CD14-positive monocyte (primary cell): ENCODE measurements at regions of chr4 and their contacts with region 1.

Region 1: GRCh38 chr4:184343502-184344177 is 126.0 kb upstream of the ENPP6 start:
- DNase-seq: peak in 2 of 3 donors; percentile 52 to 56
- H3K4me3 ChIP-seq: peak overlapping the region; percentile 50 to 87 (median 76)
- H3K4me3 Mint-ChIP-seq: peak overlapping the region; percentile 82 to 93
- H3K27ac ChIP-seq: peak overlapping the region; percentile 78 to 98
- H3K27ac Mint-ChIP-seq: peak overlapping the region; percentile 89 to 99 (median 98)
- H3K4me1 ChIP-seq: peaks cover 64 to 72% of the 10 kb centered on the region in 2 donors
- H3K4me1 Mint-ChIP-seq: peaks cover 77% of the 10 kb centered on the region
- H3K27me3 ChIP-seq: no peaks in the 10 kb centered on the region
- H3K27me3 Mint-ChIP-seq: peaks cover 0 to 3% (median 0%) of the 10 kb centered on the region in 3 donors
- CTCF ChIP-seq: no peak

Region 2: DNA sequence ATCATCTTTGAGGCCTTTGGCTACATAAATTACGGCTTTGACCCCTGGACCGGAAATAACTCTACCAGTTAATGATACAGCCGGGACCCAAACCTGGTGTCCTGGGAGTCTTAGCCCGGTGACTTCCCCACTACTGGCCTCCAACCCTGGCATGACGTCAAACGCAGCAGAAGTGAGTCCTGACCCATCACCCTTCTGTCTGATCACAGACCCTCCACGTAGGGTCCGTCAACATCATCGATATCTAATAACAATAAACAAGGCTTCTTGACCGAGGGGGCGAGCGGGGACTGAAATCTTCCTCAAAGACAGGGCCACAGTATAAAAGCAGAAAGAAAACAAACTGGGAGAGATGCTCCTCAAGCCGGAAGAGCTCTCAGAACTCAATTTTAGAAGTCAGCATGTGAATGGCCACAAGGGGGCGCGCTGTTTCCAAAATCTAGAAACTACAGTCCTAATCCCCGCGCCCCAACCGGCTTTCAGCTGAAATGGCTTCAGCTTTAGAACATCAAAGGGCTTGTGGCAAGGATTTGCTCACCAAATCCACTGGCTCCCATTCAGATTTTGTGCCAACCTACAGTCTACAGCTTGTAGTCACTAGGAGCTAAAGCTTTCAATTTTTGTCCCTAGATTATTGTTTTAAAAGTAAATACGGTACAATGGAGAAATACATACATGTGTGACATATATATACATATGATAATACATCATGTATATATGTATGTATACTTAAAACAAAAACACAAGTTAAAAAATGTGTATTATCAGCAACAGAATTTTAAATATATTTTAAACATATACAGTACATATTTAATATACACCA is 79.5 kb before region 1 on chr4:
- intact Hi-C with region 1: loop called in 1 of 2 experiments (anchors 10 kb)
- DNase-seq: peak; percentile 85 to 91 (median 90)
- H3K4me3 ChIP-seq: no peak overlapping the region
- H3K4me3 Mint-ChIP-seq: peak overlapping the region; percentile 14 to 61
- H3K27ac ChIP-seq: peak overlapping the region in 1 of 2 donors; percentile 24
- H3K27ac Mint-ChIP-seq: peak overlapping the region in 4 of 7 donors; percentile 15 to 74 (median 31)
- H3K4me1 ChIP-seq: peaks cover 22 to 38% of the 10 kb centered on the region in 2 donors
- H3K4me1 Mint-ChIP-seq: peaks cover 44% of the 10 kb centered on the region
- H3K27me3 ChIP-seq: no peaks in the 10 kb centered on the region
- H3K27me3 Mint-ChIP-seq: peaks cover 0 to 4% (median 0%) of the 10 kb centered on the region in 3 donors
- CTCF ChIP-seq: peak; percentile 80

Region 3: DNA sequence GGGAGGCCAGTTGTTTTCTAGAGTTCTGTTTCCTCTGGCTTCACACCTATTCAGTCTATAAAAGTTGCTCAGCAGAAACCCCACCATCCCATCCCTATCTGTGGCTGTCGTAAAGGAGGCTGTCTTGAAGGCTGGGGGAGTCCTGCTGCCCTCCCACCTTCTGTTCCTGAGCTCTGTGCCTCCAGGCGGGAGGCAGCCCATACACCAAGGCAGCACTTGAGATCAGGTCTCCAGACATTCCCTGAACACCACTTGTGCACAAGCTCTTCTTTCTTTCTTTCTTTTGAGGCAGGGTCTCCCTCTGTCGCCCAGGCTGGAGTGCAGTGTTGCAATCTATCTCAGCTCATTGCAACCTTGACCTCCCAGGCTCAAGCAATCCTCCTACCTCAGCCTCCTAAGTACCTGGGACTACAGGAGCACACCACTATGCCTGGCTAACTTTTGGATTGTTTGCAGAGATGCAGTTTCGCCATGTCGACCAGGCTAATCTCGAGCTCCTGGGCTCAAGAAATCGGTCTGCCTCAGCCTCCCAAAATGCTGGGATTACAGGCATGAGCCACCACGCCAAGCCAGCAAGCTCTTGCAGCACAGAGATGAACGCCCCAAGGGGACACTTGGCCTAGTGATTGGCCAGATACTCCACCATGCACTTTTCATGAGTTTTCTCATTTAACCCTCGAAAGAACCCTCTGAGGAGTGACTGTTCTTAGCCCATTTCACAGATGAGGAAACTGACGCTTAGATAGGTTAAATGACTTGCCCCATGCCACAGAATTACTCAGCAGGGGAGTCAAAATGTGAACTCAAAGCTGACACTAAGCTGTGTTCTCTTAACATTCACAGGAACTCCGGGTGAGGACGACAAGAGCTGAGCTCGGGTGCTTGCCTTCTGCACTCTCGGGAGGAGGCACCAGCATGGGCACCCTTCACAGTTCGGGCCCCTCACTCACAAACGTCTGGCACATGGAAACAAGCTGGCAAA is 70.2 kb before region 1 on chr4:
- intact Hi-C with region 1: loop called (anchors 10 kb)
- DNase-seq: no peak
- H3K4me3 ChIP-seq: no peak overlapping the region
- H3K4me3 Mint-ChIP-seq: no peak overlapping the region
- H3K27ac ChIP-seq: no peak overlapping the region
- H3K27ac Mint-ChIP-seq: peak overlapping the region in 1 of 7 donors; percentile 38
- H3K4me1 ChIP-seq: peaks cover 5 to 7% of the 10 kb centered on the region in 2 donors
- H3K4me1 Mint-ChIP-seq: peaks cover 8% of the 10 kb centered on the region
- H3K27me3 ChIP-seq: no peaks in the 10 kb centered on the region
- H3K27me3 Mint-ChIP-seq: peaks cover 1 to 3% (median 1%) of the 10 kb centered on the region in 3 donors
- CTCF ChIP-seq: no peak

Region 4: GRCh38 chr4:184287697-184288255 is 55.9 kb before region 1 on chr4:
- intact Hi-C with region 1: no loop called
- DNase-seq: no peak
- H3K4me3 ChIP-seq: no peak overlapping the region
- H3K4me3 Mint-ChIP-seq: no peak overlapping the region
- H3K27ac ChIP-seq: no peak overlapping the region
- H3K27ac Mint-ChIP-seq: no peak overlapping the region
- H3K4me1 ChIP-seq: peaks cover 3 to 5% of the 10 kb centered on the region in 2 donors
- H3K4me1 Mint-ChIP-seq: peaks cover 14% of the 10 kb centered on the region
- H3K27me3 ChIP-seq: no peaks in the 10 kb centered on the region
- H3K27me3 Mint-ChIP-seq: peaks cover 0 to 1% (median 0%) of the 10 kb centered on the region in 3 donors
- CTCF ChIP-seq: no peak

Region 5: DNA sequence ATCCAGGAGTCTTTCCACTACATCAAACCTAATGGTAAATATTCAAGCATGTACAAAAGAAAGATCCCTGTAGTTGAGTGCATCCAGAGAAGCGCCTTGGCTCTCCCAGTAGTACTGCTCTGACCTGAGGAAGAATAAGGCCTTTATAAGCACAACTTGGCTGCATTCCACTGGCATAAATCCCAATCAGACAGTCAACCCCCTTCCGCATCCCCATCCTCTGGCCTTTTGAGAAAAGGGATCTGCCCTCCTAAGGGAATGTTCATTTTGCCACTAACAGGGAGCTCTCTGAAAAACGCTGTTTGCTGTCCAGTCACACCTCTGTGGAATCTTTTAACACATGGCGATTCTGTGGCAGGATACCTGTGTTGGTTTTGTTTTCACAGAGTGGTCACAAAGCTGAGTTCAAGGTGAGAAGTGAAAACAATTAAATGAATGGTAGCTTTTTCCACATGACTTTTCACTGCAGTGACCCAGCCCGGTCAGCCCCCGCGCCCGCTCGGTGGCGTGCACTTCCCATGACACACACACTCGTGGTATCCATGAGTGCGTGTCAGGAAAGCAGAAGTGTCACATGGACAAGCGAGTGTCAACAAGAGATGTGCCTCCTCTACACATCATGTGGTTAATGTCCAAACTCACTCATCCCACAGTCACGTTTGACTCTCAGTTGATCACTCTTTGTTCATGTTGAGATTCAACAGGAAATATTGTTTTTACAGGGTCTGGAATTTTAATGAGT is 13.8 kb before region 1 on chr4:
- intact Hi-C with region 1: loop called in 1 of 2 experiments (anchors 2 kb)
- DNase-seq: peak; percentile 92 to 100 (median 93)
- H3K4me3 ChIP-seq: no peak overlapping the region
- H3K4me3 Mint-ChIP-seq: peak overlapping the region in 1 of 2 donors; percentile 70
- H3K27ac ChIP-seq: peak overlapping the region; percentile 82 to 96
- H3K27ac Mint-ChIP-seq: peak overlapping the region in 6 of 7 donors; percentile 58 to 98 (median 96)
- H3K4me1 ChIP-seq: peaks cover 66 to 70% of the 10 kb centered on the region in 2 donors
- H3K4me1 Mint-ChIP-seq: peaks cover 64% of the 10 kb centered on the region
- H3K27me3 ChIP-seq: no peaks in the 10 kb centered on the region
- H3K27me3 Mint-ChIP-seq: peaks cover 0 to 5% (median 1%) of the 10 kb centered on the region in 3 donors
- CTCF ChIP-seq: no peak

Region 6: DNA sequence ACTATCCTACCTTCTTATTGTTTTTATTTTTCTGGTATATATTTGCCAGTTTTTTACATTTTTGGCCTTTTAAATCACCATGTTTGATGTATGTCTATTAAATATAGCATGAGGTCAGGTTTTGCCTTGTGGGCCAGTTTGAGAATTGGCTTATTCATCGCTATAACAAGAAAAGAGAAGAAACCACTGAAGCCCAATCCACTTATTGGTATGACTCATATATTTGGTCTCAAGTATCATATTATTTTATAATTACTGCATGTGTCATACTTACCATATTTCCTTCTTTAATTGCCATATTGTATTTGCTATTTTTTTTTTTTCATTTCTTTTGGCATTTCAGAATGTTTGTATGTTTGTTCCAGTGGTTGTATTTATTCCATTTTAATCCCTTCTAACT is 31.4 kb after region 1 on chr4:
- intact Hi-C with region 1: loop called in 1 of 2 experiments (anchors 1 kb)
- DNase-seq: peak in 2 of 3 donors; percentile 40 to 69
- H3K4me3 ChIP-seq: no peak overlapping the region
- H3K4me3 Mint-ChIP-seq: no peak overlapping the region
- H3K27ac ChIP-seq: peak overlapping the region in 1 of 2 donors; percentile 11
- H3K27ac Mint-ChIP-seq: peak overlapping the region in 2 of 7 donors; percentile 85 to 88
- H3K4me1 ChIP-seq: peaks cover 9 to 14% of the 10 kb centered on the region in 2 donors
- H3K4me1 Mint-ChIP-seq: peaks cover 22% of the 10 kb centered on the region
- H3K27me3 ChIP-seq: no peaks in the 10 kb centered on the region
- H3K27me3 Mint-ChIP-seq: no peaks in the 10 kb centered on the region
- CTCF ChIP-seq: no peak

Region 7: GRCh38 chr4:184392748-184393334 is 49.2 kb after region 1 on chr4:
- intact Hi-C with region 1: loop called in 1 of 2 experiments (anchors 5 kb)
- DNase-seq: peak; percentile 80 to 91 (median 87)
- H3K4me3 ChIP-seq: peak overlapping the region; percentile 30 to 75 (median 39)
- H3K4me3 Mint-ChIP-seq: peak overlapping the region; percentile 78 to 92
- H3K27ac ChIP-seq: peak overlapping the region; percentile 92 to 95
- H3K27ac Mint-ChIP-seq: peak overlapping the region; percentile 91 to 97 (median 96)
- H3K4me1 ChIP-seq: peaks cover 58 to 75% of the 10 kb centered on the region in 2 donors
- H3K4me1 Mint-ChIP-seq: peaks cover 84% of the 10 kb centered on the region
- H3K27me3 ChIP-seq: no peaks in the 10 kb centered on the region
- H3K27me3 Mint-ChIP-seq: no peaks in the 10 kb centered on the region
- CTCF ChIP-seq: no peak

Region 8: DNA sequence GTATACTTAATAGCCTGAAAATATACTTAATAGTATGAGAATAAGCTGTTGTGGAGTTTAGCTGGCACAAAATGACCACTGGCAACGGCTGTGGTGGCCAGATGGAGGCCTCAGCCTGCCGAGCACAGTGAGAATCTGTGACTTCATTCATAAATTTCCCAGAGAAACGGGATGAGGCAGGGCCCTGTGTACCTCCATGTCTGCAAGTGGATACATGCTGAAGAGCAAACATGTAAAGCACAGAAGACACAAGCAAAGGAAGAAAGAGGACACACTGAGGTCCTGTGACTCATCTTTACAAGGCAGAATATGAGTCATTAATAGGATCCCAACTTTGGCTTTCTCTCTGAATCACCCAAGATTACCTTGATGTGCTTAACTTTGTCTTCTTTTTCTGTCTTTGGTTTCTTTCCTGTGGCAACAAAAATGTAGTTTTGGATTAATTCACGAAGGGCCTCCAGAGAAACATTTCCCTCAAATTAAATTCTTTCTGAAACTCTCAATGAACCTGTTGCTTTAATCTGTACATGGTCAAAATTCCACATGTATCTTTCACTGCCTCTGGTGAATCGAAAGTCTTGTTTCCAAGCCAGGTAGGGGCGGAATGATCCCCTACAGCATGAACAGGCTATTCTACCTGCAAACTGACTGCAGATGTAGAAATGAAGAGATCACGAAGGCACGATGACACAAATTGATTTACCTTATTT is 74.3 kb after region 1 on chr4:
- intact Hi-C with region 1: loop called in 1 of 2 experiments (anchors 5 kb)
- DNase-seq: peak; percentile 69 to 92 (median 89)
- H3K4me3 ChIP-seq: peak overlapping the region in 1 of 3 experiments; percentile 66
- H3K4me3 Mint-ChIP-seq: peak overlapping the region in 1 of 2 donors; percentile 75
- H3K27ac ChIP-seq: peak overlapping the region; percentile 73 to 91
- H3K27ac Mint-ChIP-seq: peak overlapping the region; percentile 93 to 98 (median 96)
- H3K4me1 ChIP-seq: peaks cover 53 to 64% of the 10 kb centered on the region in 2 donors
- H3K4me1 Mint-ChIP-seq: peaks cover 63% of the 10 kb centered on the region
- H3K27me3 ChIP-seq: no peaks in the 10 kb centered on the region
- H3K27me3 Mint-ChIP-seq: no peaks in the 10 kb centered on the region
- CTCF ChIP-seq: no peak

Region 9: DNA sequence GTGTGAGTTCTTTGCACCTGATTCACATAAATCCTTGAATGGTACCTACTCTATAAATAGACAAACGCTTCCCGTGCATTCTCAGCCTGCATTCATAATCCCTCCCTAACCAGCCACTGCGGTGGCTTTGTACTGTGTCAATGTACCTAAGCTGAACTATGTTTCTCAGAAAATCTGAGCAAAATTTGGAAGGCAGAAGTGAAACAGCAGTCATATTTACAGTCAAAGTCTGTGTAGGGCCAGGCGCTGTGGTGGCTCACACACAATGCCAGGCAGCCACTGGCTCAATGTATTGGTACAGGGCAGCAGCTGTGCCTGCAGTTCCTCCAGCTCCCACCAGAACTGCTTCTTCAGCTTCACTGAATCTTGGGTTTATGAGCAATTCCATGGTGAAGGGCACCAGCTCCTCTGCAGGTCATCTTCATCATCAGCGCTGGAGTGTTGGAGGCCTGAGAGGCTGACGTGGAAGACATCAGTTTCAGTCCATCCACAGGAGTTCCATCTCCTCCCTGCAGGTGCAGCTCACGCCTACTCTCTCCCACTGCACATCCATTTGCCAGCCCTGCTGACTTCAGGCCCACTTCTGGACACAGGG is 163.0 kb after region 1 on chr4:
- intact Hi-C with region 1: no loop called
- DNase-seq: peak; percentile 37 to 57 (median 41)
- H3K4me3 ChIP-seq: no peak overlapping the region
- H3K4me3 Mint-ChIP-seq: no peak overlapping the region
- H3K27ac ChIP-seq: no peak overlapping the region
- H3K27ac Mint-ChIP-seq: peak overlapping the region in 2 of 7 donors; percentile 2 to 51
- H3K4me1 ChIP-seq: peaks cover 38 to 40% of the 10 kb centered on the region in 2 donors
- H3K4me1 Mint-ChIP-seq: peaks cover 47% of the 10 kb centered on the region
- H3K27me3 ChIP-seq: no peaks in the 10 kb centered on the region
- H3K27me3 Mint-ChIP-seq: peaks cover 0 to 4% (median 0%) of the 10 kb centered on the region in 3 donors
- CTCF ChIP-seq: peak; percentile 52